GM18951 (cell line): ENCODE measurements at regions of chr20 and their contacts with region 1.

Region 1: GRCh38 chr20:7859356-7859802 is 80.9 kb downstream of the HAO1 start:
- POLR2A ChIP-seq: no peak

Region 2: GRCh38 chr20:6828794-6829423 is 1030.5 kb before region 1 on chr20:
- in situ Hi-C with region 1: loop called (anchors 25 kb)
- POLR2A ChIP-seq: no peak